H1 (cell line): ENCODE measurements at regions of chr11 and their contacts with region 1.

Region 1: GRCh38 chr11:6307876-6308275 is 12.4 kb downstream of the CAVIN3 start:
- DNase-seq: no peak
- H3K4me3 ChIP-seq: no peak overlapping the region
- H3K27ac ChIP-seq: no peak overlapping the region
- H3K4me1 ChIP-seq: peaks cover 0 to 7% (median 4%) of the 10 kb centered on the region in 4 experiments; a peak in 2 of 7 replicates
- H3K27me3 ChIP-seq: no peaks in the 10 kb centered on the region
- CTCF ChIP-seq: no peak
- EP300 ChIP-seq: no peak
- POLR2A ChIP-seq: no peak
- RAD21 ChIP-seq: no peak

Region 2: GRCh38 chr11:6238902-6239301 is 69.0 kb before region 1 on chr11 and contains the start of gene CNGA4:
- CTCF ChIA-PET with region 1: no interaction called
- POLR2A ChIA-PET with region 1: no interaction called
- DNase-seq: no peak
- H3K4me3 ChIP-seq: no peak within 1 kb of the TSS
- H3K27ac ChIP-seq: no peak within 1 kb of the TSS
- H3K4me1 ChIP-seq: peaks cover 0 to under 1% (median under 1%) of the 10 kb centered on the region in 4 experiments; a peak in 3 of 7 replicates
- H3K27me3 ChIP-seq: peaks cover 0 to 2% (median under 1%) of the 10 kb centered on the region in 4 experiments; a peak in 1 of 7 replicates
- CTCF ChIP-seq: no peak
- EP300 ChIP-seq: no peak
- POLR2A ChIP-seq: no peak
- RAD21 ChIP-seq: no peak
- total RNA-seq, gene CNGA4: 0.33 TPM in 1 of 2 replicates, not detected in the other

Region 3: GRCh38 chr11:6285019-6285418 is 22.9 kb before region 1 on chr11:
- CTCF ChIA-PET with region 1: interaction called, 127 read pairs
- POLR2A ChIA-PET with region 1: no interaction called
- DNase-seq: no peak
- H3K4me3 ChIP-seq: no peak overlapping the region
- H3K27ac ChIP-seq: no peak overlapping the region
- H3K4me1 ChIP-seq: peaks cover 0 to 2% (median 0%) of the 10 kb centered on the region in 4 experiments; a peak in 2 of 7 replicates
- H3K27me3 ChIP-seq: peaks cover 12 to 75% (median 45%) of the 10 kb centered on the region in 4 experiments
- CTCF ChIP-seq: no peak
- EP300 ChIP-seq: no peak
- POLR2A ChIP-seq: no peak
- RAD21 ChIP-seq: no peak